Ovary (tissue), 10 donors: ENCODE measurements at regions of chr11 and their contacts with region 1.

Region 1: GRCh38 chr11:69327741-69328191 is 33.8 kb downstream of the MYEOV start:
- DNase-seq: no peak
- H3K4me3 ChIP-seq: no peak overlapping the region
- H3K27ac ChIP-seq: no peak overlapping the region
- H3K4me1 ChIP-seq: no peaks in the 10 kb centered on the region
- H3K27me3 ChIP-seq: no peaks in the 10 kb centered on the region
- CTCF ChIP-seq: no peak
- EP300 ChIP-seq: no peak
- POLR2A ChIP-seq: no peak

Region 2: GRCh38 chr11:69088676-69089146 is 239.1 kb before region 1 on chr11:
- intact Hi-C with region 1: no loop called
- DNase-seq: peak; percentile 69 to 86 (median 82)
- H3K4me3 ChIP-seq: no peak overlapping the region
- H3K27ac ChIP-seq: no peak overlapping the region
- H3K4me1 ChIP-seq: no peaks in the 10 kb centered on the region
- H3K27me3 ChIP-seq: no peaks in the 10 kb centered on the region
- CTCF ChIP-seq: peak; percentile 71 to 79 (median 75)
- EP300 ChIP-seq: no peak
- POLR2A ChIP-seq: no peak

Region 3: DNA sequence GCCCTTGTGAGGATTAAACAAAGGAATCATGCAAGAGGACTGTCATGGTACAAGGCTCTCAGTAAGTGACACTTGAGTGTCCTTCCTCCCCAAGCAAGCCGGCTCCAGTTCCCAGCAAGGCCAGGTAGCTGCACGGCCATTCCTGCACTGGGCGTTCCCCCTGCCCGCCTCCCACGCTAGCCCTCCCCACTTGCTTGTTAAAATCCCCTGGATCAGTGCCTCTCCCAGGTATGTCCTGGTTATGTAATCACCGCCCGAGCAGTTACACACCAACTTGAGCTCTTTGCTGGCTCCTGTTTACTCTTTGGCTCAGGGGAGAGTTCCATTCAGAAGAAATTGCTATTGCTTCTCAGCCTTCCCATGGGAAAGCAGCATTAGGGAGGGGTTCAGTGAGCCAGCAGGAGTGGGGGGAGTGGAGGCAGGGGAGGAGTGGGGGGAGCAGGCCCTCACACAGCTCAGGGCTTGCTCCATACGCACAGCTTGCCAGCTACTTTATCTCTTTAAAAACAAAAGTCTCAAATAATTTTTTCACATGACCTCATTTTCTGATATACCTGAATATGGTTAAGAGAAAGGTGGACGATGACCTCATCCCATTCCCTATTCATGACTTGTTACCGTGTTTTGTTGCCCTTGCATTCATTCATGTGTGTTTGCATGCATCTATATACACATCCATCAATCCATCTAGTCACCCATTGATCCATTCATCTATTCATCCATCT is 53.1 kb before region 1 on chr11:
- intact Hi-C with region 1: loop called in 1 of 4 experiments (anchors 2 kb)
- DNase-seq: no peak
- H3K4me3 ChIP-seq: no peak overlapping the region
- H3K27ac ChIP-seq: no peak overlapping the region
- H3K4me1 ChIP-seq: no peaks in the 10 kb centered on the region
- H3K27me3 ChIP-seq: no peaks in the 10 kb centered on the region
- CTCF ChIP-seq: no peak
- EP300 ChIP-seq: no peak
- POLR2A ChIP-seq: no peak

Region 4: DNA sequence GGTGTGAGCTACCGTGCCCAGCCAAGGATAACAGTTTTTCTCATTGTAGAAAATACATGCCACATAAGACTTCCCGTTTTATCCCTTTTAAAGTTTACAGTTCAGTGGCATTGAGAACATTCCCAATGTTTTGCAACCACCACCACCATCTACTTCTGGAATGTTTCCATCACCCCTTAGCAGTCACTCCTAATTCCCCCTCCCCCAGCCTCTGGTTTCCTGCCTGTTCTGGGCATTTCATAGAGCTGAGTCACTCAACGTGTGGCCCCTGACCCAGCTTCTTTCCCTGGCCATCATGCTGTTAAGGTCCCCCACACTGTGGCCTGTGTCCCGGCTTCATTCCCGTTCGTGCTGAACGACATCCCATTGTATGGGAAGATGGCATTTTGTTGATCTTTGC is 416.7 kb after region 1 on chr11:
- intact Hi-C with region 1: loop called in 1 of 4 experiments (anchors 5 kb)
- DNase-seq: no peak
- H3K4me3 ChIP-seq: no peak overlapping the region
- H3K27ac ChIP-seq: no peak overlapping the region
- H3K4me1 ChIP-seq: no peaks in the 10 kb centered on the region
- H3K27me3 ChIP-seq: no peaks in the 10 kb centered on the region
- CTCF ChIP-seq: no peak
- EP300 ChIP-seq: no peak
- POLR2A ChIP-seq: no peak